AG04450 (cell line): ENCODE measurements at regions of chr4 and their contacts with region 1.

Region 1: GRCh38 chr4:1899149-1900086 is 28.2 kb downstream of the NSD2 start:
- DNase-seq: peak; percentile 61
- H3K4me3 ChIP-seq: no peak overlapping the region
- H3K27ac ChIP-seq: no peak overlapping the region
- H3K27me3 ChIP-seq: no peaks in the 10 kb centered on the region
- CTCF ChIP-seq: peak; percentile 86

Region 2: DNA sequence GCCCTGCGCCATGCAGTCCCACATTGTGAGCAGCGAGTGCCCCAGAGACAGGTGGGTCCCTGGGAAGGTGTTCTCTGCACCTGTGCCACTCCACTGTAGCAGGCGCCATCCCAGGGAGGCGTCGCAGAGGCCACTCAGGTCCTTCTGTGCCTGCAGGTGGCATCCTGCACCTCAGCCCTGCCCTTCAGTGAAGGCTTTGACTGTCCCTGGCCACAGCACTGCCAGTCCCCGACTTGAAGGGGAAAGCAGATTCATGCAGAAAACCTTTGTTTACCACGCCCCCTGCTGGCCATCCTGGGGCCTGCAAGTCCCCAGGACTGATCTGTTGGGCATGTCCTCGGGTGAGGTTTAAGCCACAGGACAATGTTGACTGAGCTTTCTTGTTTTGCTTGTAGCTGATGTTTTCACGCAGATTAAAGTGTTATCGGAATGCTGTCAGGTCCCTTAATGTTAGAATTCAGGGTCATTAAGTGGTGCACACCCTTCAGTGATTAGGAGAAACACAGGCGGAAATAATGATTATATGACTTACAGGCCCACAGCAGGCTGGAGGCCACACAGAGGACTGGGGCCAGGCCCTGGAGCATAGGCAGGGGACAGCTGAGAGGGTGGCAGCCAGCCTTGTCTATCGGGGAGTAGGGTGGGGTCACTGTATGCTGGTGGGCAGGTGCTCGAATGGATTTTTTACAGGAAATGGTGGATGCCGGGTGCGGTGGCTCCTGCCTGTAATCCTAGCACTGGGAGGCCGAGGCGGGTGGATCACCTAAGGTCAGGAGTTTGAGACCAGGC is 173.1 kb before region 1 on chr4:
- CTCF ChIA-PET with region 1: interaction called, 10 read pairs
- POLR2A ChIA-PET with region 1: no interaction called
- DNase-seq: peak; percentile 43
- H3K4me3 ChIP-seq: no peak overlapping the region
- H3K27ac ChIP-seq: peak overlapping the region; percentile 11
- H3K27me3 ChIP-seq: no peaks in the 10 kb centered on the region
- CTCF ChIP-seq: peak; percentile 98

Region 3: DNA sequence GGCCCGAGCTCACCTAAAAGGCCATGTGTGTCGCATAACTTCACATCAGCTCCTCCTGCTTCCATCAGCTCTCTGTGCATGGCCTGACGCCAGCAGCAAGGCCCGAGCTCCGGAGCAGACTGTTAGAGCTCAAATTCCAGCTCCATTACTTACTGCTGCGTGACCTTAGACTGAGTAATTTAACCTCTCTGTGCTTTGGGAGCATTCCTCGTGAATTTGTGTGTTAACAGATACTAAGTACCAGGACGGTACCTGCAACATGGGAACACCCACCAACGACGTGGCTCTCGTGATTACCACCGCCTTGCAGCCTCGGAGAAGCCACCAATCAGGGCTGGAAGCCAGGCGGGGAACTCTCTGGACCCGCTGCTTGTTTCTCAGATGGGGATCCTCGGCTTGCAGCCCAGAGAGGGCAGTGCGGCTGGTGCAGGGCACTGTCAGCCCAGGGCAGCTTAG is 56.4 kb before region 1 on chr4:
- CTCF ChIA-PET with region 1: interaction called, 15 read pairs
- POLR2A ChIA-PET with region 1: no interaction called
- DNase-seq: peak; percentile 68
- H3K4me3 ChIP-seq: no peak overlapping the region
- H3K27ac ChIP-seq: peak overlapping the region; percentile 75
- H3K27me3 ChIP-seq: no peaks in the 10 kb centered on the region
- CTCF ChIP-seq: no peak

Region 4: DNA sequence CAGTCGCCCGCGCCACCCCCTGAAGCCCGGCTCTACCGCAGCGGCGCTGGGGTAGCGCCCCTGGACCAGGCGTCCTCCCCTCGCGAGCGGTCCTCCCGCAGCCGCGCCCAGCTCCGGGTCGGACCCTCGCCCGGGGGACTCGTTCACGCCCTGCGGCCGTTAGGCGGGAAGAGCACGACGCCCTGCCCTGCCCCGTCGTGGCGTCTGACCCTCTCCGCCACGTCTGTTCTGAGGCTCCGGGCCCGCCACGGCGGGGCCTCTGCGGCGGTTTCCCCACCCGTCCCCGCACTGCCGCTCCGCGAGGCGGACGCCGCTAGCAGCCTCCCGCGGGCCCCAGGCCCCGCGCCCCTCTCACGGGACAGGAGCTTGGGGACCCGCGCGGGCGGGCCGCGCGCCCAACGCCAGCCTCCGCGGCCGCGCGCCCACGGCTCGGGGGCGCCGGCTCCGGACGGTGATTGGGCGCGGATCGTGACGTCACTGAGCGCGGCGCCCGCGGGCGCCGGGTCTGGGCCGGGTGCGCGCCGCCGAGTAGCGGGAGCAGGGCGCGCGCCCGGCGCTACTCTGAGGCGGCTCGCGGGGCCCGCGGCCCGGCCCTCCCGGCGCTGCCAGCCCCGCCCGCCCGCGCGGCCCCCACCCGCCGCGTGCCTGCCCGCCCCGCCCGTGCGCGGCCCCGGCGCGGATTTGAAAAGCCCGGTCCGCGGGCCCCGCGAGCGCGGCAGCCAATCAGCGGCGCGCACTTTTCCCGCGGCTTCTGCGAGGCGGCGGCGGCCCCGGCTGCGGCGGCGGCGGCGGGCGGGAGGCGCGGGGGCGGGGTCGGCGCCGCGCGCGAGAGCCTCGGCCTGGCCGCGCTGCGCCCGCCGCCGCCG is 28.6 kb before region 1 on chr4 and contains the start of gene NSD2:
- CTCF ChIA-PET with region 1: interaction called, 20 read pairs
- POLR2A ChIA-PET with region 1: interaction called, 3 read pairs
- DNase-seq: peak; percentile 45
- H3K4me3 ChIP-seq: peak within 1 kb of the TSS; percentile 76
- H3K27ac ChIP-seq: peak within 1 kb of the TSS; percentile 68
- H3K27me3 ChIP-seq: no peaks in the 10 kb centered on the region
- CTCF ChIP-seq: no peak
- polyA plus RNA-seq, gene NSD2: 23.7 and 26.4 TPM in 2 replicates

Region 5: DNA sequence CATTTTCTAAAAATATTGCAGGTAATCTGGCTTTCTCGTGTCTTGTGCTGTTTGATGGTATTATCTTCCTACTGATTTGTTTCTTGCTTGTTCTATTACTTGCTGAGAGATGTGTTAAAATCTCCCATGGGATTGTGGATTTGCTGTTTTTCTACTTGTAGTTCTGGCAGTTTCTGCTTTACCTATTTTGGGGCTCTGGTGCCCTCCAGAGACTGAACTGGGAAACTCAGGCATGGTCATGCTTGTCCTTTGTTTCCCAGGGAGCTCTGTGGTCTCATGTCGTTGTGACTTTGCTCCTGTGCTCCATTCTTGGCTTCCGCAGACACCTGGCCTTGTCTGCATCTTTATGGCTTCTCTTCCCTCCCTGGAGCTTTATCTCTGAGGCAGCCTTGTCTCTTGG is 11.2 kb after region 1 on chr4:
- CTCF ChIA-PET with region 1: interaction called, 81 read pairs
- POLR2A ChIA-PET with region 1: no interaction called
- DNase-seq: peak; percentile 10
- H3K4me3 ChIP-seq: no peak overlapping the region
- H3K27ac ChIP-seq: no peak overlapping the region
- H3K27me3 ChIP-seq: no peaks in the 10 kb centered on the region
- CTCF ChIP-seq: peak; percentile 87

Region 6: GRCh38 chr4:2059034-2059725 is 159.8 kb after region 1 on chr4 and contains the start of gene NAT8L:
- CTCF ChIA-PET with region 1: no interaction called
- POLR2A ChIA-PET with region 1: no interaction called
- DNase-seq: no peak
- H3K4me3 ChIP-seq: peak within 1 kb of the TSS; percentile 17; the same call in 1 of the 2 replicates
- H3K27ac ChIP-seq: no peak within 1 kb of the TSS
- H3K27me3 ChIP-seq: peaks cover 36% of the 10 kb centered on the region
- CTCF ChIP-seq: no peak
- polyA plus RNA-seq, gene NAT8L: not detected in 2 replicates